Aorta (tissue), 5 donors: ENCODE measurements at regions of chr15 and their contacts with region 1.

Region 1: DNA sequence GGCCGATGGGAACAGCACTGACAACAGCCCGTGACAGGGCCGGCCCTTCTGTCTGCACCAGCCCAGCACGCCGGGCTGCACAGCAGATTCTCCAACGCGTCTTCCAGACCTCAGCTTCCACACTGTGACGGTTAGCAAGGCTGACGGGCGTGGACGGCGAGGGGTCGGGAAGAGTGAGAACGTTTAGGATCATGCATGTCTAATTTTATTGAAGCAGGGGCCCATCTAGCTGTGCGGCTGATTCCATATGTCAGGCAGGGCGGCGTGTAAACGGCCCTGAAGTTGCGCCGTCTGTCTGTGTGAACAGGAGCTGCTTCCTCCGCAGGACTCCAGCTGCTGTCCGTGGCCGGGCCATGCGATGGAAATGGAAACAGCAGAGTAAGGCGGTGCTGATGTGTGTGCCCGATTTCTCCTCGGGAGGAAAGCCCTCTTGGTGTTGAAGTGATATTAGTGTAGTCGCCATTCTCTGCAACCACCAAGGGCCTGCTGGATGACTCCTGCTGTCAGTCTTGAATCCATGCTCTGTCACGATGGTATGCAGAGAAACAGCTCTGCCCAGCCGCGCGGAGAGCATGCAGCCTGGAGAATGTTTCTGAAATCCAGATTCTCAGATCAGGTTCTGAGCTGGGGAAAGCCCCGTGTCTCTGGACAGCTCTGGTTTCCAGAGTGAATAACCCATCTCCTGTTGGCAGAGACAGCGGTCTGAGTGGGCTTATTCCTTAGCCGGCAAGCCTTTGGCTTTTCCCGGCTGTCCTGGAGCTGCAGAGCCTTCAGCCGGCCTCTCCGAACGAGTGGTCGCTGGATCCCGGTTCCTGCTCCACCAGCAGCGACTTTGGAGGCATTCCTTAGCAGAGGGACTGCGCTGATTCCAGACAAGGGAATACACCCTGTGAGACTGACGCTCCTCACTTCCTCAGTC is 158.1 kb upstream of the UBE3A start:
- DNase-seq: no peak
- ATAC-seq: peak; percentile 67
- H3K4me3 ChIP-seq: no peak overlapping the region
- H3K27ac ChIP-seq: peak overlapping the region; percentile 4 to 76
- H3K4me1 ChIP-seq: peaks cover 0 to 2% of the 10 kb centered on the region in 2 donors
- H3K27me3 ChIP-seq: no peaks in the 10 kb centered on the region

Region 2: DNA sequence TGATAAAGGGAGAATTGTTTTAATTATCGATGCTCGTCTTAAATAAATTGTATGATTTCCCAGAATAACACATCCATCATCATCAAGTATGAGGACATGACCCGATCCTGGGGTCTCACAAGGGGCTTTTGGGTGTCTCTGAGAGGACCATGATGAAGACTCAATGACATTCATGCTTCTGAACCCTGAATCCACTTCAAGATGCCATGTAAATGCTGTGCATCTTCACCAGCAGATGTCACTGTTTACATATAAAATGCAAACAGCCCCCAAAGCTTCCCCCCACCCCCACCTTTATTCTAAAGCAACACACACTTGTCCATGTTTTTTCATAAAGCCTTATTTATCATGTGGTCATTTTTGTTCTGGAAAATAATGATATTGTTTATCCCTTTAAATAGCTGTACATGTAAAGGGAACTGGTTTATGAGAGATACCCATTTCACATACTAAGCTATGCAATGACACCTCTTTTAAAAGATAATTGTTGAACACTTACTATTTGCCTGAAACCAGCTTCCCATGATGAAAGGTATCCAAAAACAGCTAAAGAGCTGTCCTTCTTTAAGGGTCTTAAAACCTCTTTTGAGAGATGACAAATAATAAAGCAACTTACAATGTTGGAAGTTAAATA is 88.4 kb before region 1 on chr15:
- intact Hi-C with region 1: no loop called
- DNase-seq: no peak
- ATAC-seq: no peak
- H3K4me3 ChIP-seq: no peak overlapping the region
- H3K27ac ChIP-seq: no peak overlapping the region
- H3K4me1 ChIP-seq: peaks cover 0 to 4% of the 10 kb centered on the region in 2 donors
- H3K27me3 ChIP-seq: no peaks in the 10 kb centered on the region

Region 3: GRCh38 chr15:25670025-25670554 is 73.2 kb after region 1 on chr15:
- intact Hi-C with region 1: loop called in 1 of 2 experiments (anchors 5 kb)
- DNase-seq: peak; percentile 85 to 91
- ATAC-seq: peak; percentile 85
- H3K4me3 ChIP-seq: no peak overlapping the region
- H3K27ac ChIP-seq: peak overlapping the region; percentile 29 to 73
- H3K4me1 ChIP-seq: peaks cover 3 to 5% of the 10 kb centered on the region in 2 donors
- H3K27me3 ChIP-seq: no peaks in the 10 kb centered on the region